ENCODE measurements at regions of chr7 and their contacts with region 1.

Region 1: GRCh38 chr7:30740424-30741181 is 11.3 kb upstream of the INMT start:
- DNase-seq: peak; percentile 63
- H3K4me3 Mint-ChIP-seq: no peak overlapping the region
- H3K27ac Mint-ChIP-seq: no peak overlapping the region
- H3K4me1 Mint-ChIP-seq: peaks cover 34% of the 10 kb centered on the region
- H3K27me3 Mint-ChIP-seq: peaks cover 4% of the 10 kb centered on the region

Region 2: GRCh38 chr7:30276203-30276900 is 464.3 kb before region 1 on chr7:
- intact Hi-C with region 1: loop called (anchors 10 kb)
- DNase-seq: peak; percentile 28
- H3K4me3 Mint-ChIP-seq: no peak overlapping the region
- H3K27ac Mint-ChIP-seq: no peak overlapping the region
- H3K4me1 Mint-ChIP-seq: peaks cover 8% of the 10 kb centered on the region
- H3K27me3 Mint-ChIP-seq: peaks cover 4% of the 10 kb centered on the region

Region 3: GRCh38 chr7:30548762-30549344 is 191.8 kb before region 1 on chr7:
- intact Hi-C with region 1: loop called (anchors 1 kb)
- DNase-seq: no peak
- H3K4me3 Mint-ChIP-seq: no peak overlapping the region
- H3K27ac Mint-ChIP-seq: no peak overlapping the region
- H3K4me1 Mint-ChIP-seq: no peaks in the 10 kb centered on the region
- H3K27me3 Mint-ChIP-seq: no peaks in the 10 kb centered on the region

Region 4: GRCh38 chr7:30702200-30702599 is 38.4 kb before region 1 on chr7:
- intact Hi-C with region 1: loop called (anchors 1 kb)
- DNase-seq: peak; percentile 10
- H3K4me3 Mint-ChIP-seq: no peak overlapping the region
- H3K27ac Mint-ChIP-seq: no peak overlapping the region
- H3K4me1 Mint-ChIP-seq: peaks cover 14% of the 10 kb centered on the region
- H3K27me3 Mint-ChIP-seq: no peaks in the 10 kb centered on the region

Region 5: GRCh38 chr7:30750683-30751650 is 10.4 kb after region 1 on chr7:
- intact Hi-C with region 1: no loop called
- DNase-seq: no peak
- H3K4me3 Mint-ChIP-seq: no peak overlapping the region
- H3K27ac Mint-ChIP-seq: no peak overlapping the region
- H3K4me1 Mint-ChIP-seq: no peaks in the 10 kb centered on the region
- H3K27me3 Mint-ChIP-seq: no peaks in the 10 kb centered on the region

Region 6: DNA sequence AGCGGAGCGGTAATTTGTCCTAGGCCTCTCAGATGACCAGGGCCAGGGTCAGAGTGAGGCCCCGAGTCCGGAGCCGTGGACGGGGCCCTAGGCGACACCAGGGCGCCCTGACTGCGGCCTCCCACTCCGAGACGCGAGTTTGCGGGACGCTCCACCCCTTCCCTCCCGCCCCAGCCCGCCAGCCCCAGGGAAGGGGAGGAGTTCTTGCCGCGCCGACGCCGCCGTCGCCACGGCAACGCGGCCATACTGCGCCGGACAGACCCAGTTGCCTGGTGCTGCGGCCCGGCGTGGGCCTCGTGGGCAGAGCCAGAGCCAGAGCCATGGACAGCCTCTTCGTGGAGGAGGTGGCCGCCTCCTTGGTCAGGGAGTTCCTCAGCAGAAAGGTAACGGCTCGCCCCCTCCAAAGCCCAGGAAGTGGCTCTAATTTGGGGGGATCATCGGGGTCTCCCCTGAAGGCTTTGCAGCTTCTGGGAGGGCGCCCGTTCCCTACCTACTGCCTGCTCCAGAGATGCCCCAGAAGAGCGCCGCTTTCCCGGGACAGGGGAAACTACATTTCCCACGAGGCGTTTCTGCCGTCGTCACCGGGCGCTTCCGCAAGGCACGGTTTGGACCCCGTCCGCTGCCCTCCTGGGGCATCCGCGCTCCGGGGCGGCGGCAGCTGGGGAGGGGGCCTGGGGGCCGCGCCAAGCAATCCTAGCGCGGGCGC is 30.7 kb after region 1 on chr7 and contains the start of gene MINDY4:
- intact Hi-C with region 1: loop called (anchors 2 kb)
- DNase-seq: peak; percentile 57
- H3K4me3 Mint-ChIP-seq: peak within 1 kb of the TSS; percentile 83
- H3K27ac Mint-ChIP-seq: peak within 1 kb of the TSS; percentile 77
- H3K4me1 Mint-ChIP-seq: peaks cover 12% of the 10 kb centered on the region
- H3K27me3 Mint-ChIP-seq: peaks cover 7% of the 10 kb centered on the region
- total RNA-seq, gene MINDY4: 0.96 and 2.2 TPM in 2 replicates

Region 7: DNA sequence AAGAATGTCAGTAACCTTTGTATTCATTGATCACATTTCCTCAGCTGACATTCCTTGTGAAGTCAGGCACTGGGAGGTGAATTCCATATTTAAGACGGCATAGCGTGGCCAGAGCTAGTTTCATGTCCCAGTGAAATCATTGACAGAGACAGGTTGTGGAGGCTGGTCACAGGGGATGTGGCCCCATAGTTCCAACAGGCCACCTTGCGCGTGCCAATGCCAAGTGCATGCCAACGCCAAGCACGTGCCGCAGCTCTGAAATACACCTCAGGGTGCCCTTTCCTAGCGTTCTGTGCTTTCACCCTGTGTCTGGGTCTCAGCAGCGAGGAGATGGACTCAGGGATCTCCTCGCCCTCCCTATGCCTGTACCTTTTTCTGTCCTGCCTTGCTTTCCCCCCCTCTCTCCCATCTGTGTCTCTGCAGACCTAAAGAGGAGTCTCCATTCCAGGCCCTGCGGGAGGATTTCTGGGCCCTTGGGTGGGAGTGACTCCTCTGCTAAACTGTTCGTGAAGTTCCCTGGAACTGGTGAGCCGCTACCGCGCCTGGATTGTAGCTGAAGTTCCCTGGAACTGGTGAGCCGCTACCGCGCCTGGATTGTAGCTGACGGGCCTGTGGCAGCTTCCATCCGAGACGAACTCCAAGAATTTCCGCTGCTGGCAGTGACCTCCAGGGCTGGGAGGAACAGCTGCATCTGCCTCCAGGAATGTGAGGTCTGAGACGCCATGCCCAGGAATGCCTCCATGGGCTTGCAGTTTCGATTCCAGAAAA is 190.7 kb after region 1 on chr7:
- intact Hi-C with region 1: no loop called
- DNase-seq: no peak
- H3K4me3 Mint-ChIP-seq: no peak overlapping the region
- H3K27ac Mint-ChIP-seq: no peak overlapping the region
- H3K4me1 Mint-ChIP-seq: no peaks in the 10 kb centered on the region
- H3K27me3 Mint-ChIP-seq: no peaks in the 10 kb centered on the region